ENCODE measurements at regions of chr11 and their contacts with region 1.

Region 1: DNA sequence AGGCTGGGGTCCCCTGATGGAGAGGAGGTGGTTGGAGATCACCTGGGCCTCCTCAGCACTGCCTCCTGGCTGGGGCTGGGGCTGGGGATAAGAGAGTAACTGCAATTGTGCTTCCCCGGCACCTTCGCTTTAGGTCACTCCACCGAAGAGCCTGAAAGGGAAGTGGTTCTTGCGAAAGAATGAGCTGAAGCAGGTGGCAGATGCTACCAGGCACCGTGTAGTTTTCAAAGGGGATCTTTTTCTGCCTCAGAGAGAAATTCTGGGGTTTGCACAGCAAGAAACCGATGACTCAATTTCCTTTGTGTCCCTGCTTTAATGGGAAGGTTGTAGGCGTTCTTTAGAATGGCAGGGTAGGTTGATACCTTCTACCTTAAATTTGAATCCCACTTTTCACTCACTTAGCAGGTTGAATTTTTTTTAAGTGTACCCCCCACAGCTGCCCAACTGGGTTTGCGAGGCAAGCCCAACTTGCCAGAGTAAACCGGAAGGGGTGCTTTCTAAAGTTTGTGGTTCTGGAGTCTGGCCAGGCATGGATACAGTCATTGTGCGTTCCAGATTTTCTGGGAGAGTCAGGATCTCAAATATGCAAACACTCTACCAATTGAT is 5.3 kb downstream of the CD44 start:
- DNase-seq: peak; percentile 85
- ATAC-seq: peak; percentile 67
- H3K4me3 ChIP-seq: peak overlapping the region; percentile 56
- H3K27ac ChIP-seq: peak overlapping the region; percentile 54
- H3K4me1 ChIP-seq: peaks cover 55% of the 10 kb centered on the region
- H3K27me3 ChIP-seq: no peaks in the 10 kb centered on the region
- CTCF ChIP-seq: peak in 2 of 3 experiments; percentile 18 to 22; a peak in 2 of 6 replicates
- EP300 ChIP-seq: peak; percentile 64 to 77; a peak in 3 of 4 replicates
- POLR2A ChIP-seq: 0 out of 2 replicates have a peak, but pooled peaks have one; percentile 52
- RAD21 ChIP-seq: peak; percentile 41; the same call in 1 of the 2 replicates

Region 2: GRCh38 chr11:34968862-34969261 is 175.4 kb before region 1 on chr11:
- CTCF ChIA-PET with region 1: no interaction called
- POLR2A ChIA-PET with region 1: no interaction called
- RAD21 ChIA-PET with region 1: no interaction called
- SMC1A ChIA-PET with region 1: no interaction called
- in situ Hi-C with region 1: no loop called
- intact Hi-C with region 1: no loop called
- DNase-seq: no peak
- ATAC-seq: no peak
- H3K4me3 ChIP-seq: no peak overlapping the region
- H3K27ac ChIP-seq: no peak overlapping the region
- H3K4me1 ChIP-seq: no peaks in the 10 kb centered on the region
- H3K27me3 ChIP-seq: no peaks in the 10 kb centered on the region
- CTCF ChIP-seq: no peak
- EP300 ChIP-seq: no peak
- POLR2A ChIP-seq: no peak
- RAD21 ChIP-seq: no peak

Region 3: DNA sequence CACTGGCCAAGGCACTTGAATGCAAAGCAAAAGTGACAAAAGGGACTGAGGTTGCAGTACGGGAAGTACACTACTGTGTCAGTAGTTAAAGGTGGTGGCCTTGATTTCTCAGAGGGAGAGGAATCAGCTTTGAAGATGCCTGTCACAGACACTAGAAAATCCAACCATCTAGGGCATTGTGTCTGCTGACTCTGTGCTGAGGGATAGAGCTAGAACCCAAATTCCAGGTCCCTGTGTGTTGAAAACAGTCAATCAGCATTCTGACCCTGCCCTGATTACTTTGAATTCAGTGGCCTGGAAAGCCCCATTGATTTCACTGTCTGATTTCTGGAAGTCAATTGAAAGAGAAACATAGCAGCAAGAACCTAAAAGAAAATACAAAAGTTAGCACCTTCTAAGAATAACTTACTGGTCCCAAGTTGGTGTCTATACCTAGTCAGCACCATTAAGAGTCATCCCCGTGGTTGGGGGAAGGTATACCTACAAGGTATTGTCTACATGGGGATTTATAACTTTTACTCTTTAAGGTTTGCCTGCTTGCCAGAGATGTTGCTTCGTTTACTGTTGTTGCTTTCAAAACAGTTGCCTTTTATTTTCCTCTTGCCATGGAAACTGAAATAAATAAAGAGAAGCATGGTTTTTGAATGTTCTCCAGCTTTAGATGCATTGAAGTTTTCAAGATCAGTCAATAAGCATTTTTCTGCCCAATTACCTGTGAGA is 130.6 kb before region 1 on chr11:
- CTCF ChIA-PET with region 1: interaction called, 3 read pairs
- POLR2A ChIA-PET with region 1: interaction called, 4 read pairs
- RAD21 ChIA-PET with region 1: interaction called, 8 read pairs
- SMC1A ChIA-PET with region 1: interaction called, 47 read pairs
- in situ Hi-C with region 1: loop called (anchors 5 kb)
- intact Hi-C with region 1: no loop called
- DNase-seq: no peak
- ATAC-seq: peak; percentile 73
- H3K4me3 ChIP-seq: peak overlapping the region; percentile 11; the same call in 1 of the 2 replicates
- H3K27ac ChIP-seq: peak overlapping the region; percentile 73
- H3K4me1 ChIP-seq: peaks cover 22% of the 10 kb centered on the region
- H3K27me3 ChIP-seq: no peaks in the 10 kb centered on the region
- CTCF ChIP-seq: no peak
- EP300 ChIP-seq: peak; percentile 58 to 63; a peak in 3 of 4 replicates
- POLR2A ChIP-seq: no peak
- RAD21 ChIP-seq: 0 out of 2 replicates have a peak, but pooled peaks have one; percentile 10

Region 4: DNA sequence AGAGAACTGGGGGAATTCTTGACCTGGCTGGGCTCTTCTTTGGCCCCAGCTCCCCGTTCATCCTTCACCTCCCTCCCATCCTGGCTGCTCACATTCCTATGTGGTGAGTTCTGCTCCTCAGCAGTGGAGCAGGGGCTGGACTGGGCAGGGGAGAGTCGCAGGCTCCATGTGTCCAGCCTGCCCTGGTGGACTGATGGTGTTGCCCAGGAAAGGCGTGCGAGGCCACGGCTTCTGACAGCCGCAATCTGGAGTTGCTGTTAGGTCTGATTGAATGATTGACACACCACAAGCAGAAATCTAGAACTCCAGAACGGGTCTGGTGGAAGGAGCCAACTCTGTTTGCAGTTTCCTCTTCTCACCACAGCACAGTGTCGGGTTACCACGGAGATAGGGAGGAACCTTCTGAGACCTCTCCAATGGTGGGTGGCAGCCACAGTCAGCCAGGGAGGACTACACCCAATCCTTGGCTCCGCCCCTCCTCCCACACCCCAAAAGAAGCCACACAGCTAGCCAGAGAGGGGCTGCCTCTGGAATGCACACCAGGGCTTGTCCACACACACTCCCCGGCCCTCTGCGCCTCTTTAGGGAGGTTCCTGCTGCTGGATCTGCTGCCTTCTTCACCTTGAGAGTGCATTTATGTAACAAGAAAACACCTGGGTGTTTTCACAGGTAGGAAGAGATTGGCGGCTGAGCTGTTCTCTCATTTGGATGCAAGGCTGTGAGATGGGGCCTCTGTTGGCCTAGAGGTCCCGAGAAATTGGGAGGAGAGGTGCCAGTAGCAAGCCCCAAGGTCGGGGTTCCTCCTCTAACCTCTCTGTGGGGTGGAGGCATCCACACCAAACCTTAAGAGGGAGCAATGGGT is 61.7 kb before region 1 on chr11:
- CTCF ChIA-PET with region 1: interaction called, 3 read pairs
- POLR2A ChIA-PET with region 1: interaction called, 4 read pairs
- RAD21 ChIA-PET with region 1: interaction called, 7 read pairs
- SMC1A ChIA-PET with region 1: interaction called, 7 read pairs
- in situ Hi-C with region 1: no loop called
- intact Hi-C with region 1: loop called (anchors 2 kb)
- DNase-seq: peak; percentile 83
- ATAC-seq: peak; percentile 85
- H3K4me3 ChIP-seq: peak overlapping the region; percentile 42; the same call in 1 of the 2 replicates
- H3K27ac ChIP-seq: peak overlapping the region; percentile 75
- H3K4me1 ChIP-seq: peaks cover 48% of the 10 kb centered on the region
- H3K27me3 ChIP-seq: no peaks in the 10 kb centered on the region
- CTCF ChIP-seq: no peak; a peak in 1 of 6 replicates
- EP300 ChIP-seq: peak; percentile 48 to 49; a peak in 1 of 4 replicates
- POLR2A ChIP-seq: peak; percentile 71
- RAD21 ChIP-seq: no peak

Region 5: DNA sequence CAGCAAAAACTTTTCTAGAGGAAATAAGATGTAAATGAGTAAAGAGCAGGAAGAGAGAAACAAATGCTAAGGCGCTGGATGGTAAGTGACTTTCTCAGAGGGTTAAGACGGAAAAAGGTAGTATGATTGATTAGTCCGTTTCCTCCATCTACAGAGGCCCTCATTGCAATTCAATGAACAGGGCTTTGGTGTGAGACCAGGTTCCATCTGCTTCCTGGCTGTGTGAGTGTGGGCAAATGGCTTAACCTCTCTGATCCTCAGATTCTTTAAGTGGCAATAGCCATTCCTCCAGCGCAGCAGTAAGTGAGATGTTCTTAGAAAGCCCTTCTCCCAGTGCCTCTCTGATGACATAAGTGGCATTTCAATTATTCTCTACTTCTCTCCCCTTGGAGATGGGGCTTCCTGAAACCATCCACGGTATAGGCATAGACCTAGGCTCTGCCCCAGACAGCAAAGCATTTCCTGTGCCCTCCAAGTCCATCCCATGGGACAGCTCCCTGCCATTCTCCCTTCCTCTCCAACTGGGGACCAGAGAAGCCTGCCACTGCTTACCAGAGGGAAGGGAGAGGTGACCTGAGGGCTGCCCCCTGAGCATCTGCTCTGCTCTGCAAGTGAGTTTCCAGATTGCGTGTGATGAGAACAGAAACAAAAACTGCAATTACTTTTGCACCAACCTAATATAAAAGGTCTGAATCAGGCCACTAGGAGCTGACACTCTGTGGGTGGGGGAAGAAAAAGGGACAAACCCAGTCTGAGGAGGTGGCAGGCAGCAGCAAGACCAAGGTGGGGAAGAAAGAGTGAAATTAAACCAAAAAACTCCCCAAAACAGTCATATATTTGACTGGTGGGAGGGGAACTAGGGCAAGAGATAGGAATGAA is 18.0 kb before region 1 on chr11:
- CTCF ChIA-PET with region 1: interaction called, 10 read pairs
- POLR2A ChIA-PET with region 1: interaction called, 7 read pairs
- RAD21 ChIA-PET with region 1: interaction called, 40 read pairs
- SMC1A ChIA-PET with region 1: interaction called, 27 read pairs
- in situ Hi-C with region 1: no loop called
- intact Hi-C with region 1: loop called (anchors 2 kb)
- DNase-seq: peak; percentile 88
- ATAC-seq: peak; percentile 84
- H3K4me3 ChIP-seq: peak overlapping the region; percentile 0; the same call in 1 of the 2 replicates
- H3K27ac ChIP-seq: peak overlapping the region; percentile 77
- H3K4me1 ChIP-seq: peaks cover 60% of the 10 kb centered on the region
- H3K27me3 ChIP-seq: no peaks in the 10 kb centered on the region
- CTCF ChIP-seq: peak; percentile 10 to 36 (median 14); a peak in 3 of 6 replicates
- EP300 ChIP-seq: peak; percentile 71 to 87
- POLR2A ChIP-seq: peak; percentile 63
- RAD21 ChIP-seq: peak; percentile 54

Region 6: DNA sequence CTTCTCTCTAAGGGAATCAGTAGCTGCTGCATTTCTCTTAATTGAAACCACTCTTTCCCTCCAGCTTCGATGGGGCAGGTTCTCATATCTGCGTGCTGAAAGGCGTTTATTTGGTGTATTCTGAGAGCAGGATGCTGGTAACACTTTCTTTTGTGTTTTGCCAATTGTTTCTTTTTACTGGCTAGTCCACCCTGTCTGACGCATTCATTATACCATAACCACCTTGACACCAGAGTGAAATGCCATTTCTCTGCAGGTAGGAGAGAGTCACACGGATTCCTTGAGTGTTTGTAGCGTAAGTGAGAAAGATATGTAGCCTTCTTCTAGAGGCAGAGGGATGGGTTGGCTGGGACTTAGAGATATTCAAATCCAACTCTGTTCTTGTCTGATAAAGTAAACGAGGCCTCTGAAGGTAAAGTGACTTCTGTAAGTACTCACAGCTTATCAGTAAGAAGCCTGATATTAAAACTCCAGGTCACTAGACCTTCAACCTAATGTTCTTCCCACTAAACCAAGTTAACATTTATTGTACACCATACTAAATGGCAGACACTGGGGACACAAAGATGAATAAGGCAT is 16.1 kb after region 1 on chr11:
- CTCF ChIA-PET with region 1: interaction called, 111 read pairs
- POLR2A ChIA-PET with region 1: interaction called, 22 read pairs
- RAD21 ChIA-PET with region 1: interaction called, 38 read pairs
- SMC1A ChIA-PET with region 1: interaction called, 76 read pairs
- in situ Hi-C with region 1: no loop called
- intact Hi-C with region 1: loop called (anchors 1 kb)
- DNase-seq: no peak
- ATAC-seq: no peak
- H3K4me3 ChIP-seq: no peak overlapping the region
- H3K27ac ChIP-seq: no peak overlapping the region
- H3K4me1 ChIP-seq: peaks cover 31% of the 10 kb centered on the region
- H3K27me3 ChIP-seq: no peaks in the 10 kb centered on the region
- CTCF ChIP-seq: no peak
- EP300 ChIP-seq: no peak
- POLR2A ChIP-seq: no peak
- RAD21 ChIP-seq: no peak

Region 7: GRCh38 chr11:35182317-35182939 is 38.2 kb after region 1 on chr11:
- CTCF ChIA-PET with region 1: interaction called, 5 read pairs
- POLR2A ChIA-PET with region 1: interaction called, 3 read pairs
- RAD21 ChIA-PET with region 1: interaction called, 13 read pairs
- SMC1A ChIA-PET with region 1: interaction called, 17 read pairs
- in situ Hi-C with region 1: no loop called
- intact Hi-C with region 1: no loop called
- DNase-seq: peak; percentile 52
- ATAC-seq: peak; percentile 93
- H3K4me3 ChIP-seq: no peak overlapping the region
- H3K27ac ChIP-seq: peak overlapping the region; percentile 51
- H3K4me1 ChIP-seq: peaks cover 19% of the 10 kb centered on the region
- H3K27me3 ChIP-seq: no peaks in the 10 kb centered on the region
- CTCF ChIP-seq: no peak
- EP300 ChIP-seq: no peak
- POLR2A ChIP-seq: no peak
- RAD21 ChIP-seq: no peak

Region 8: GRCh38 chr11:35237860-35238715 is 93.8 kb after region 1 on chr11:
- CTCF ChIA-PET with region 1: interaction called, 9 read pairs
- POLR2A ChIA-PET with region 1: interaction called, 3 read pairs
- RAD21 ChIA-PET with region 1: interaction called, 6 read pairs
- SMC1A ChIA-PET with region 1: interaction called, 18 read pairs
- in situ Hi-C with region 1: no loop called
- intact Hi-C with region 1: loop called (anchors 5 kb)
- DNase-seq: peak; percentile 35
- ATAC-seq: peak; percentile 70
- H3K4me3 ChIP-seq: no peak overlapping the region
- H3K27ac ChIP-seq: no peak overlapping the region
- H3K4me1 ChIP-seq: peaks cover 19% of the 10 kb centered on the region
- H3K27me3 ChIP-seq: no peaks in the 10 kb centered on the region
- CTCF ChIP-seq: peak; percentile 73 to 82 (median 82)
- EP300 ChIP-seq: no peak
- POLR2A ChIP-seq: no peak
- RAD21 ChIP-seq: peak; percentile 84